Mammary epithelial cell (primary cell): ENCODE measurements at regions of chr6 and their contacts with region 1.

Region 1: GRCh38 chr6:45697605-45698004 is 318.1 kb downstream of the CLIC5 start:
- DNase-seq: peak; percentile 94
- H3K4me3 ChIP-seq: no peak overlapping the region
- H3K27ac ChIP-seq: peak overlapping the region; percentile 75
- H3K4me1 ChIP-seq: peaks cover 23% of the 10 kb centered on the region
- H3K27me3 ChIP-seq: no peaks in the 10 kb centered on the region
- CTCF ChIP-seq: no peak

Region 2: DNA sequence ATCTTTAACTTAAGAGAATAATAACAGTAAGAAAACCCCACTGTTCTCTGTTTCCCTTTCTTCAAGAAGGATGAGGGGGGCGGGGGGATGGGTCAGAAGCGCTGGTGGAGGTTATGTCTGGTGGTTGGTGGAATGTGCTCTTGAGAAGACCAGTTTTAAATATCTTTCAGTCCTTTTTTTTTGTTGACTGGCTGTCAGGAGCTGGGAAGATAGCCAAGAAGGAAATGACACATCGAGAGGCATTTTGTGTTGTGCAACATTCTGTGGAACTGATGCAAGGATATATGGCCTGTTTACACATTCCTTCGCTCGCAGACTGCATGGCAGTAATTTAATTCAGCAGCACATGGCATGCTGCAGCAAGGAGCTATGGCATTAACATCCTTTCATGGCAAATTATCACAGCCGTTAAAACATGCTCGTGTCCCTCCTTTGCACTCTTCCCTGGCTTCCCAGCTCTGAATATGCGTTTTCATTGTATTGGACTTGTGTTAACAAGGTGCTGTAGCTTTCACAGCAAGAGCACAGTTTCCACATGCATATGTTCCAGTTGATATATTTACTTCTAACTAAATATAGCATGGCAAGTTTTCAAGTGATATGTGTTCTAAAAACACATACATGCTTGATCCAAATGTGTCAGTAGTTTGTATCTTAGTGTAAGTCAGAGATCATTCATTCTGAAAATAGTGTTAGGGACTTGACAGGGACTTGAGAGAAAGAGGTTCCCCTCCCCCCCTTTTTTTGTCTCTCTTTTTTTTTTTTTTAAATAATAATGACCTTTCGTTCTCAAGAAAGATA is 251.7 kb before region 1 on chr6:
- CTCF ChIA-PET with region 1: no interaction called
- dilution Hi-C with region 1: no loop called
- in situ Hi-C with region 1: no loop called
- intact Hi-C with region 1: loop called (anchors 5 kb)
- DNase-seq: peak; percentile 95
- H3K4me3 ChIP-seq: peak overlapping the region in 1 of 3 experiments; percentile 11
- H3K27ac ChIP-seq: peak overlapping the region; percentile 51
- H3K4me1 ChIP-seq: peaks cover 20% of the 10 kb centered on the region
- H3K27me3 ChIP-seq: no peaks in the 10 kb centered on the region
- CTCF ChIP-seq: no peak

Region 3: DNA sequence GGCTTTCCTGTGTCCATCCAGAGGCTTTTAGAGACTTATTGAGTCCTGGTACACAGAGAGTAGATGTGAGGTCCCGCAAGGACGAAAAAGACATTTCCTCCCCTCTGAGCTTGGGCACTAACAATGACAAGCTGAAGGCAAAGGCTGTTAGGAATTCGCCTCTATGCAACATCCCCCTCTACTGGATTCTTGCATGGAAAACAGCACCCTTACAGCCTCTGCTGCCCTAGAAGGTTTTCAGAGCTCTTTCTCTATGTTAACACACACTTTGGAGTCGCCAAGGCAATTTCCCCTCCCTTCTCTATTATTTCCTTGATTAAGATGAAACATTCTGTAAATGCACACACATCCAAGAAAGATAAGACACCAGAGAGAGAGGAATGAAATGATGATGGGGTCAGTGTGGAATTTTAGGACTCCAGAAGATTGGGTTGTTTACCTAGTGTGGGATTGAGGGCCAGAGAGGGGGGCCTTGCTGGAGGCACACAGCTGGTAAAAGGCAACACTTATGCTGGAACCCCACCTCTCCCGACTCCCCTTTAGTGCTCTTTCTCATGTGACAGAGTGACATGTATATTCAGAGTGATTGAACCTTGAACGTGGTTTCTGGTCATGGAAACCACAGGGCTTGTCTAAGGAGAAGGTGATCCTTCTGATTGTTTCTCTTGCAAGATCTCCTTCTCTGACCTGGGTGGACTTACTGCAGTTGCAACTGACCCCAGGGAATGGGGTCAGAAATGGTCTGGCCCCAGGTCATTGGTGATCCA is 17.3 kb after region 1 on chr6:
- CTCF ChIA-PET with region 1: no interaction called
- dilution Hi-C with region 1: no loop called
- in situ Hi-C with region 1: no loop called
- intact Hi-C with region 1: no loop called
- DNase-seq: peak; percentile 64
- H3K4me3 ChIP-seq: no peak overlapping the region
- H3K27ac ChIP-seq: no peak overlapping the region
- H3K4me1 ChIP-seq: no peaks in the 10 kb centered on the region
- H3K27me3 ChIP-seq: no peaks in the 10 kb centered on the region
- CTCF ChIP-seq: peak; percentile 88 to 94

Region 4: DNA sequence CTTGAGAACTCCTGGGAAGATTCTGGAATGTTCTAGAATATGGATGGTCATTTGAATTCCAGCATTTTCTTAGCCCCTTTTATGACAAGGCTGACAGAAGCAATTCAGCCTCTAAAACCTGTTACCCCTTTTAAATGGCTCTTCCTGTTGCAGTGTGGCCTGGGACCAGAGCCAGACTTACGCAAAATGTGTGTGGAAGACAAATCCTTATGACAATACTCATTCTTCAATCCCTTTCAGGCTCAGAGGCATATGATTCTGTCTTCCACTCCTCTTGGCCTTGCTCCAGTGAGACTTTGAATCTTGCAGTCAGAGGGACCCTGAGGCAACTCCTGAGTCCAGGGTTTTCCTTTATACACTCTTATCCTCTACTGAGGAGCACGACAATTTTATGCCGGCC is 31.1 kb after region 1 on chr6:
- CTCF ChIA-PET with region 1: no interaction called
- dilution Hi-C with region 1: no loop called
- in situ Hi-C with region 1: no loop called
- intact Hi-C with region 1: no loop called
- DNase-seq: peak; percentile 58
- H3K4me3 ChIP-seq: no peak overlapping the region
- H3K27ac ChIP-seq: no peak overlapping the region
- H3K4me1 ChIP-seq: peaks cover 5% of the 10 kb centered on the region
- H3K27me3 ChIP-seq: no peaks in the 10 kb centered on the region
- CTCF ChIP-seq: no peak

Region 5: DNA sequence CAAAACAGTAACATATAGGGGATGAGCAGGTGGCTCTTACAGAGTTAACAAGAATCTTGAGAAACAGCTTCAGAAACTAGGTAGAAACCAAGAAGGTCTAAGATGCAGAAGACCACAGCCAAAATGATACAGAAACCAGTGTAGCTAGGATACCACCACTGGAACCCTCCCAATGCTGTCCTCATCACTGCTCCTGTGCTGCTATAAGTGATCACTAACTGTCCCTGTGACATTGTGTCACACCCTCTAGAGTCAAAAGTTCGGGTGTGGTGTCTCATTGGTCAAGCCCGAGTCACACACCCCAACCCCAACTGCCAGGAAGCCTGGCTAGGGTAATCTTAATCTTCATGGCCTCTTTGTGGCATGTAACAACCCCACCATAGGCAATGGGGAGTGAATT is 640.5 kb after region 1 on chr6:
- CTCF ChIA-PET with region 1: no interaction called
- dilution Hi-C with region 1: no loop called
- in situ Hi-C with region 1: no loop called
- intact Hi-C with region 1: no loop called
- DNase-seq: no peak
- H3K4me3 ChIP-seq: no peak overlapping the region
- H3K27ac ChIP-seq: no peak overlapping the region
- H3K4me1 ChIP-seq: no peaks in the 10 kb centered on the region
- H3K27me3 ChIP-seq: peaks cover 4% of the 10 kb centered on the region
- CTCF ChIP-seq: no peak